K562 (cell line): ENCODE measurements at regions of chr20 and their contacts with region 1.

Region 1: DNA sequence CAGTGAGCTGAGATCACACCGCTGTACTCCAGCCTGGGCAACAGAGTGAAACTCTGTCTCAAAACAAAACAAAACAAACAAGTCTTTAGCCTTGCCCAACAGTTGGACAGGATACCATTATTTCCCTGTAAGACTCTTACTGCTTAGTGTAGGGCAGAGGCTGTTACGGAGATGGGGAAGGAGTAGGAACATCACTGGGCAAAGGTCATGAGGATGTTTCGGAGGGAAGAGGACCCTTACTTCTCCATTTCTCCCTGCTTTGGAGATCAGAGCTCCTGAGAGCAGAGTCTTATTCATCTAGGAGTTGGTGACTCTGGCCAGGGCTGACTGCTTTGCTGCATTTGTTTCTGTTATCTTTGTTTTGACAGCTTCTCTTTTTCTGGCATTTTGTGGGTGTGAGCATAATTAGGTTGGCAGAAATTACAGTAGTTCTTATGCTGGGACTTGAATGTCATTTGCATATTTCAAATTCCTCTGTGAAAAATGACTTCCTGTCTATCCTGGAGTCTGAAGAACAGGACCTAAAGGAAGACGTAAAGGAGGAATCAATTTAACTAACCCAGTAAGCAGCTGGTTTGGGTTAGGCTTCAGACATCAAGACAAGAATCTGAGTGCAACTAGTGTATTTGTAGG is 89.0 kb downstream of the CDS2 start:
- DNase-seq: no peak
- ATAC-seq: no peak
- H3K4me3 ChIP-seq: no peak overlapping the region
- H3K27ac ChIP-seq: no peak overlapping the region
- H3K4me1 ChIP-seq: no peaks in the 10 kb centered on the region
- H3K27me3 ChIP-seq: no peaks in the 10 kb centered on the region; a peak in 1 of 5 replicates
- CTCF ChIP-seq: no peak
- EP300 ChIP-seq: no peak
- POLR2A ChIP-seq: no peak
- RAD21 ChIP-seq: no peak

Region 2: DNA sequence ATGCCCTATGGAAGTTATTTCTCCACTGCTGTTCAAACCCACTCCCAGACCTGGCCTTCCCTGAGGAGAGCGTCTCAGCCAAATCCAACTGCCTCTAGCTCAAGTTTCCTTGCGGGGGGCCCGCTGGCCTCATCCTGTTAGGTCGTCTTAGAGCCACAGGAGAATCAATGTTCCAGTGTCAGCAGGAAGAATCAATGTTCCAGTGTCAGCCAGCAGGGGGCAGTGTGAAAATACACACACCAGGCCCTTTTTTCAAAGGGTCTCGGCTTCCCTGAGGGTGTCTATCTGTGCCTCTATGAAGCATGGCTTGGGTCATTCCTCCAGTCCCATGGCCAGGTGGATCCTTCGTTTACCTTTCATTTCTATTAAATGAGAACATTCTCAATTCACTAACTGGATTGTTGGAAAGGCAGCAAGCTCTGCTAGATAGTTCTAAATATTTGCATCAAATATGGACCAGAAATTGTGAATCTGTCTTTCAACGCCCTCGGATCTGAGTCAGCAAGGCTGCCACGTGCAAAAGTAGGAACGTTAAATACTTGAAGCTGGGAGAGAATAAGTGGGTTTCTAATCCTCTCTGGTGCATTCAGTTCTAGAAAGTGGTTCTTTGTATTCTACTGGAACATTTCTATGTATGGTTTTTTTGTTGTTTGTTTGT is 474.9 kb before region 1 on chr20:
- CTCF ChIA-PET with region 1: no interaction called
- POLR2A ChIA-PET with region 1: no interaction called
- in situ Hi-C with region 1: loop called (anchors 5 kb)
- intact Hi-C with region 1: no loop called
- DNase-seq: peak; percentile 33 to 49 (median 44)
- ATAC-seq: peak; percentile 67
- H3K4me3 ChIP-seq: no peak overlapping the region
- H3K27ac ChIP-seq: no peak overlapping the region
- H3K4me1 ChIP-seq: no peaks in the 10 kb centered on the region
- H3K27me3 ChIP-seq: peaks cover 0 to 6% of the 10 kb centered on the region in 2 experiments; a peak in 1 of 5 replicates
- CTCF ChIP-seq: peak; percentile 50 to 77 (median 62)
- EP300 ChIP-seq: no peak
- POLR2A ChIP-seq: no peak
- RAD21 ChIP-seq: peak in 1 of 2 experiments; percentile 56; a peak in 2 of 4 replicates

Region 3: GRCh38 chr20:5234158-5234557 is 18.4 kb after region 1 on chr20:
- CTCF ChIA-PET with region 1: no interaction called
- POLR2A ChIA-PET with region 1: no interaction called
- in situ Hi-C with region 1: no loop called
- intact Hi-C with region 1: no loop called
- DNase-seq: no peak
- ATAC-seq: no peak
- H3K4me3 ChIP-seq: no peak overlapping the region
- H3K27ac ChIP-seq: no peak overlapping the region
- H3K4me1 ChIP-seq: no peaks in the 10 kb centered on the region
- H3K27me3 ChIP-seq: no peaks in the 10 kb centered on the region
- CTCF ChIP-seq: no peak
- EP300 ChIP-seq: no peak
- POLR2A ChIP-seq: no peak
- RAD21 ChIP-seq: no peak